ENCODE measurements at regions of chr17 and their contacts with region 1.

Region 1: GRCh38 chr17:68457539-68458259 is 403 bp upstream of the WIPI1 start:
- DNase-seq: peak; percentile 99
- H3K4me3 ChIP-seq: peak overlapping the region; percentile 76 to 77
- H3K27ac ChIP-seq: peak overlapping the region; percentile 96 to 97
- H3K4me1 ChIP-seq: no peaks in the 10 kb centered on the region
- H3K27me3 ChIP-seq: no peaks in the 10 kb centered on the region
- CTCF ChIP-seq: peak in 2 of 4 experiments; percentile 27 to 56
- POLR2A ChIP-seq: peak; percentile 98

Region 2: GRCh38 chr17:67696853-67697505 is 760.7 kb before region 1 on chr17:
- intact Hi-C with region 1: no loop called
- DNase-seq: no peak
- H3K4me3 ChIP-seq: no peak overlapping the region
- H3K27ac ChIP-seq: no peak overlapping the region
- H3K4me1 ChIP-seq: no peaks in the 10 kb centered on the region
- H3K27me3 ChIP-seq: no peaks in the 10 kb centered on the region
- CTCF ChIP-seq: no peak
- POLR2A ChIP-seq: no peak

Region 3: DNA sequence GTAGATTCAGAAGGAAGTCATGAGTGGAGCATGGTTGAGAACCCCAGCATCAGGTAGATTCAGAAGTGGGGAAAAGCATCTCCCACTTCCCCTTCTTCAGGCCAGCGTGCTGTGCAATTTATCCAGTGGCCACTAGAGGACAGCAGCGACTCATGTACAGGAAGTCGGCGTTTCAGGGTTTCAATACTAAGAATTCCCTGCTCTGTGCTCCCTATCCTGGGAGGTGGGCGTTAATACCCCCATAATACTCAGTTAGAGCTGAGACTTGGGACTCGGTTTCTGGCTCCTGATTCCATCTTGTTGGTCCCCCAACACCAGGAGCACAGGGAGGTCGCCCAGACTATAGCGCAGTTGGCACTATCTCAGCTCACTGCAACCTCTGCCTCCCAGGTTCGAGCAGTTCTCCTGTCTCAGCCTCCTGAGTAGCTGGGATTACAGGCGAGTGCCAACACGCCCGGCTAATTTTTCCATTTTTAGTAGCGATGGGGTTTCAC is 285.2 kb before region 1 on chr17:
- intact Hi-C with region 1: loop called (anchors 10 kb)
- DNase-seq: peak; percentile 68
- H3K4me3 ChIP-seq: no peak overlapping the region
- H3K27ac ChIP-seq: no peak overlapping the region
- H3K4me1 ChIP-seq: no peaks in the 10 kb centered on the region
- H3K27me3 ChIP-seq: no peaks in the 10 kb centered on the region
- CTCF ChIP-seq: peak; percentile 81 to 94 (median 88)
- POLR2A ChIP-seq: no peak

Region 4: DNA sequence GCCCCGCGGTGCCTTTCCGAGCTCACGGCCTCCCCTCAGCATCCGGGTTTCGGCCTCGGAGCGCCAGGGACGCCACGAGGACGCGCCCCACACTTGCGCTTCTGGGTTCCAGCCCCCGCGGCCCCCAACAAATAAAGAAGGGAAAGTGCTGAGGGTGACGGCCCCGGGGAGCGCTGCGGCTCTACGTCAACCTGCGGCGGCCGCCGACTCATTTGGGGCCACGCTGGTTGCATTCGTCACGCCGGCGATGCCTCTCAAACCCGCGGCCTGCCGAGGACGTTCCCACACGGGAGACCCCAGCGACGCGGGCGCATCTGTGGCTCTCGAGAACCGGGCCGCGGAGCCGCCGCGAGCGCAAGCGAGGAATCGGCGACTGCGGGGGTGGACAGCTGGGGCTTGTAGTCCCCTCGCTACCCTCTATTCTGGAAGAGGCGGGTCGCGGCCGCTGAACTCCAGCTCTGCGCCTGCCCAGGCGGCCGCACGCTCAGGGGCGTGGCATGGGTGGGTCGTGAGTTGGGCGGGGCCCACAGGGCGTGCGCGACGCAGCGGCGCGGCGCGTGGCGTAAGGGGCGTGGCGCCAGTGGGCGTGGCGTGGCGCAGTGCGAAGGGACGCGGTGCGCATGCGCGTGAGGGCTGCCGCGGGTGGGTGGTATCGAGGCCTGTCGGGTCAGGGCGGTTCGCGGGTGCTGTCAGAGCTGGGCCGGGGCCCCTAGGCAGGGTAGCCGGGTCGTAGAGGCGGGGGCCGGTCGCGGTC is 210.1 kb before region 1 on chr17 and contains the start of gene AMZ2:
- intact Hi-C with region 1: loop called (anchors 5 kb)
- DNase-seq: peak; percentile 91
- H3K4me3 ChIP-seq: peak within 1 kb of the TSS; percentile 79 to 90
- H3K27ac ChIP-seq: peak within 1 kb of the TSS; percentile 91 to 97
- H3K4me1 ChIP-seq: no peaks in the 10 kb centered on the region
- H3K27me3 ChIP-seq: no peaks in the 10 kb centered on the region
- CTCF ChIP-seq: peak in 2 of 4 experiments; percentile 12 to 27
- POLR2A ChIP-seq: peak; percentile 95
- total RNA-seq, gene AMZ2: 51.0 to 57.4 TPM

Region 5: GRCh38 chr17:68260051-68260762 is 197.5 kb before region 1 on chr17:
- intact Hi-C with region 1: loop called (anchors 5 kb)
- DNase-seq: no peak
- H3K4me3 ChIP-seq: no peak overlapping the region
- H3K27ac ChIP-seq: no peak overlapping the region
- H3K4me1 ChIP-seq: no peaks in the 10 kb centered on the region
- H3K27me3 ChIP-seq: no peaks in the 10 kb centered on the region
- CTCF ChIP-seq: no peak
- POLR2A ChIP-seq: no peak

Region 6: GRCh38 chr17:68377862-68378770 is 79.6 kb before region 1 on chr17:
- intact Hi-C with region 1: loop called (anchors 2 kb)
- DNase-seq: peak; percentile 90
- H3K4me3 ChIP-seq: peak overlapping the region in 1 of 2 donors; percentile 15
- H3K27ac ChIP-seq: peak overlapping the region; percentile 93 to 95
- H3K4me1 ChIP-seq: peaks cover 17% of the 10 kb centered on the region
- H3K27me3 ChIP-seq: no peaks in the 10 kb centered on the region
- CTCF ChIP-seq: no peak
- POLR2A ChIP-seq: no peak

Region 7: DNA sequence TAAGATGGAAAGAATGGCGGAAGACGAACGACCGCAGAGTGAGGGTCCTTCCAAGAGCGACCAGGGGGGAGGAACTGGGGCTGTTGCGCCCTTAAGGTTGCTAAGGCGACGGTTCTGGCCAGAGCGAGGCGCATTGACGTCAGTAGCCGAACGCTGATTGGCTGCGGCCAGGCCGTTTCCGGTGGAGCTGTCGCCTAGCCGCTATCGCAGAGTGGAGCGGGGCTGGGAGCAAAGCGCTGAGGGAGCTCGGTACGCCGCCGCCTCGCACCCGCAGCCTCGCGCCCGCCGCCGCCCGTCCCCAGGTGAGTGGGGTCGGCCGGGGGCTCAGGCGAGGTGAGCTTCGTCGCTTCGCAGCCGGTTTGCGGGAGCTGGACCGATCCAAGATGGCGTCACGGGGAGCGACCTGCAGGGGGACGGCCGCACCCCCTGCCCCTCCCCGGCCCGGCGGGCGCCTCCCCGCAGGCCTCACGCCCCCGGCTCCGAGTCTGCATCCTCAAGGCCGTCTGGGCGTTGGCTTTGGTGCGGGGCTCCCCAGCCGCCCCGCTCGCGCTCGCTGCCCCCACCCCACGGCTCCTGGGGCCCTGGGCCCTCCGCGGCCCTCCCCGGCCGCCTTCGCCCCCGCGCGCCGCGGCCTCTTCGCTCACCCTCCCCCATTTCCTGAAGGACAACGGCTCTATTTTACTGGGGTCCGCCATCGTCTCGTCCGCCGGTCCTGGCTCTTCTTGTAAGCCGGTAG is 54.7 kb after region 1 on chr17 and contains the start of gene PRKAR1A:
- intact Hi-C with region 1: loop called (anchors 5 kb)
- DNase-seq: peak; percentile 96
- H3K4me3 ChIP-seq: peak within 1 kb of the TSS; percentile 85 to 94
- H3K27ac ChIP-seq: peak within 1 kb of the TSS; percentile 98
- H3K4me1 ChIP-seq: no peaks in the 10 kb centered on the region
- H3K27me3 ChIP-seq: no peaks in the 10 kb centered on the region
- CTCF ChIP-seq: peak in 1 of 4 experiments; percentile 42
- POLR2A ChIP-seq: peak; percentile 90
- total RNA-seq, gene PRKAR1A: 296 to 409 TPM

Region 8: DNA sequence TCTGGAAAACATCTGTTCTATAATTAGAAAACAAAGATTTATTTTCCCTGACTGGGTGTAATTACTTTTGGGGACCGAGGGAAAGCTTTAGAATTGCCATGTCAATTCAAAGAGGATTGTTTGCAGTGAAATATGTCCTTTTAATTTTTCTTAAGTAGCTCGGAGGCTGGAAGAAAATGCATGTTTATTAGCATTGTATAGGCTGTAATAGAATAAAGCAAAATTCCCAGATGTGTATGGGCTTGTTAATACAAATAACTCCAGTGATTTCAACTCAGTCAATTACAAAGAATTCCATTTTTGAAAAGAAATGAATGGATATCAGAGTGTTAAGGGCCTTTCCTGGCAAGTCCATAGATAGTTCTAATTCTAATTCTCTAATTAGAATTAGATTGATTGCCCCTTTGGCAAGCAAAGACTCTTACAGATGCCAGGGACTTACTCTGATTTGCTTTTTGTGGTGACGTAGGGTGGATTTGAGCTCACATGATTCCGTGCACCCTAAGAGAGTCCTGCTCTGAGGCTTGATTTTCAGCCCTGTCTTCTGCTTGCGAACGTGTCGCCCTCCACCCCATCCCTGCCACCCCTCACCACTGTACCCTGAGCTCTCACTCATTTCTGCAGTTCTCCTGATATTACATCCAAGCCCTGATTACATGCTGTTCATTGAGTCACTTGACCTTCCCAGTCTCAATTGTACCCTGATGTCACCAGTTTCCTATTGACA is 213.4 kb after region 1 on chr17:
- intact Hi-C with region 1: no loop called
- DNase-seq: no peak
- H3K4me3 ChIP-seq: no peak overlapping the region
- H3K27ac ChIP-seq: no peak overlapping the region
- H3K4me1 ChIP-seq: no peaks in the 10 kb centered on the region
- H3K27me3 ChIP-seq: no peaks in the 10 kb centered on the region
- CTCF ChIP-seq: no peak
- POLR2A ChIP-seq: no peak

Region 9: GRCh38 chr17:68759343-68760132 is 301.8 kb after region 1 on chr17:
- intact Hi-C with region 1: loop called (anchors 10 kb)
- DNase-seq: peak; percentile 75
- H3K4me3 ChIP-seq: peak overlapping the region; percentile 4 to 7
- H3K27ac ChIP-seq: peak overlapping the region; percentile 1 to 49
- H3K4me1 ChIP-seq: no peaks in the 10 kb centered on the region
- H3K27me3 ChIP-seq: no peaks in the 10 kb centered on the region
- CTCF ChIP-seq: peak; percentile 45 to 89 (median 79)
- POLR2A ChIP-seq: no peak

Measured in prostate gland (tissue), 2 donors.